Heart right ventricle (tissue), 16 donors: ENCODE measurements at regions of chr18 and their contacts with region 1.

Region 1: DNA sequence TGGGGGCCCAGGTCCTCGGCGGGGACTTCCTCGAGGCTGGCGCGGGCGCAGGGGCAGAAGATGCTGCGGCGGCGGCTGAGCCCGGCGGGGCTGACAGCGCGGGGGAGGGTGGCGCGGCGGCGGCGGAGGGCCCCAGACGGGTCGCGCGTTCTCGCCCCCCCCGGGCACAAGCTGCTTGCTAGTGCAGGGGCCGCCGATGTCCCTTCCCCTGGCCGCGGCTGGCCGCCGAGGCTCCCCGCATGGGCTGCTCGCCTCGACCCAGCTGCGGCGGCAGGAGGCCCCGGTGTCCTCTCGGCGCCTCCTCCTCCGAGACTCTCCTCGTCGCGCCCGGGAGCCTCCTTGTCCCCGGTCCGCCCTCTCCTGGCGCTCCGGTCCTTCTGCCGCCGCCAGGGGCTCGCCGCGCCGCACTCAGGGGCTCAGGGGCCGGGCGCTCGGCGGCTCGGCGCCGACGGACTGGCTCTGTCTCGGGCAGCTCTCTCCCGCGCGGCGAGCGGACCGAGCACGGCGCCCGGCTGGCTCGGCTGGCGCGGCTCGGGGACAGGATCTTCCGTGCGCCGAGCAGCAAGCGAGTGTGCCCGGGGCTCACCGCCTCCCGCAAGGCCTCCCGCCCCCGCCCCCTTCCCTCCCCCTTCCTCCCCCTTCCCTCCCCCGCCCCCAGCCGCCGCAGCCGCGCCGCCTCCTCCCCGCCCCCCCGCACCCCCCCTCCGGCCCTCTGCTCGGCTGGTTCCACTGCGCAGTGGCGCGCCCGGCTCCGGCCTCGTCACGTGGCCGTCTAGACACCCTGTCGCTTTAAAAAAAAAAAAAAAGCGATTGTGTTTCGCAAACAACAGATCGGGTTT is 902 bp upstream of the SMAD7 start:
- DNase-seq: peak; percentile 86 to 89
- ATAC-seq: peak; percentile 70 to 87 (median 82)
- H3K4me3 ChIP-seq: peak overlapping the region; percentile 68 to 96 (median 92)
- H3K27ac ChIP-seq: peak overlapping the region; percentile 93 to 100 (median 98)
- H3K4me1 ChIP-seq: peaks cover 5 to 55% (median 46%) of the 10 kb centered on the region in 9 donors
- H3K27me3 ChIP-seq: no peaks in the 10 kb centered on the region
- CTCF ChIP-seq: peak in 6 of 9 donors; percentile 13 to 56 (median 34)

Region 2: DNA sequence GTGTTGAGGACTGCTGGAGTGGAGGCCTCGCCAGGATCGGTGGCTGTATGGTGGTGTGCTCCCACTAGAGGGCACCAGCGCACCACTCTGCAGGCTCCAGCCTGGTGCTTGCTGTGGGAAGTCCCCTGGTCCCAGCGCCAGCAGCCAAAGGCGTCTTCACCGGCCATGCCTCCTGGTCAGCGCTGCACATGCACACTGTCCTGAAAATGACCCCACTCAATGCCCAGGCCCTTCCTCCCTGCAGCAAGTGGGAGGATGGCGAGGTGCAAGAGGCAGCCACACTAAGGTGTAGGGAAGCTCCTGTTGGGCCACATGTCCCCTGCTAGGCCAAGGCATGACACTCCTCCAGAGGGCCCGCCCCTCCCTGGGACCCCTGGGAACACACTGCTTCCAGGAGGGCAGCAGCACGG is 276.3 kb before region 1 on chr18:
- intact Hi-C with region 1: loop called in 8 of 10 experiments (anchors 2 to 10 kb)
- DNase-seq: peak; percentile 89 to 90
- ATAC-seq: peak; percentile 85 to 94 (median 90)
- H3K4me3 ChIP-seq: no peak overlapping the region
- H3K27ac ChIP-seq: peak overlapping the region in 2 of 10 donors; percentile 12 to 57
- H3K4me1 ChIP-seq: peaks cover 11 to 72% (median 66%) of the 10 kb centered on the region in 9 donors
- H3K27me3 ChIP-seq: no peaks in the 10 kb centered on the region
- CTCF ChIP-seq: peak; percentile 91 to 98 (median 94)

Region 3: DNA sequence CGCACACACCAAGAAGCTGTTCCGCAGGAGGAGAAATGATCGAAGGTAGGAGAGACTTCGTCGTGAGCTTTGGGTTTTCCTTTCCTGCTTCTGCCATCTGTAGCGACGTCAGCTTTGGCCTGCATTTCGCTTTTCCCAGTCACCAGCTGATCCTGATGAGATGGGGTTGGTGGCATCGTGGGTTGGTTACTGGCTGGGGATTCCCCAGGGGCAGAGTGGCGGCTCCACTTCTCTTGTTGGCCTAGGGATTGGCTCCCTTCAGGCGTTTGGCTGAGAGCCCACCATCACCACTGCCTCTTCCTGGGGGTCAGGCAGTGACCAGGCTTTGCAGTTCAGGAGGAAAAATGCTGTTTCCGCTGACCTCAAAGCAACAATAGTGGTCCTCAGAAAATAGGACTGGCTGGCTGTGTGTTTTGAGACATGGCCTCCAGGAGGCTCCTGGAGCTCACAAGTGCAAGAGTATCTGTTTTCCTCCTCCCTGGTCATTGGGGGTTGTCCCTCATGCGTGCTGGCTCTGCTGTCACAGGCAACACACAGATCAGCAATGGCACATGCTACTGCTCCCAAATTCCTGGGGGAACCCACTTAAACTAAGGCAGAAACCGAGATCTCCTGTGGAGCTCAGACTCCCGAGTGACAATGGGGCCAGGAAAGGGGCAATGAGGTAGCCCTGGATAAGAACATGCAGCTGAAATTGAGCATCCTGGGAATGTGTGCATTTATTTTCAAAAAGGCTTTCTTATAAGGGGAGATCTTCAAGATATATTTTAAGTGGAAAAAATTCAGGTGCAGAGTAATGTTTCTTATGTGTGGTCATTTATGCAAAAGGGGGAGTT is 239.8 kb before region 1 on chr18:
- intact Hi-C with region 1: loop called in 3 of 10 experiments (anchors 10 kb)
- DNase-seq: peak; percentile 28 to 69
- ATAC-seq: peak; percentile 51 to 76 (median 68)
- H3K4me3 ChIP-seq: no peak overlapping the region
- H3K27ac ChIP-seq: peak overlapping the region in 7 of 10 donors; percentile 14 to 92 (median 70)
- H3K4me1 ChIP-seq: peaks cover 23 to 86% (median 59%) of the 10 kb centered on the region in 9 donors
- H3K27me3 ChIP-seq: no peaks in the 10 kb centered on the region
- CTCF ChIP-seq: peak in 8 of 9 donors; percentile 50 to 75 (median 66)

Region 4: GRCh38 chr18:48790226-48790874 is 161.3 kb before region 1 on chr18:
- intact Hi-C with region 1: loop called in 1 of 10 experiments (anchors 5 kb)
- DNase-seq: peak; percentile 89 to 93
- ATAC-seq: peak; percentile 72 to 91 (median 89)
- H3K4me3 ChIP-seq: no peak overlapping the region
- H3K27ac ChIP-seq: peak overlapping the region; percentile 68 to 96 (median 92)
- H3K4me1 ChIP-seq: peaks cover 19 to 81% (median 48%) of the 10 kb centered on the region in 9 donors
- H3K27me3 ChIP-seq: no peaks in the 10 kb centered on the region
- CTCF ChIP-seq: no peak

Region 5: DNA sequence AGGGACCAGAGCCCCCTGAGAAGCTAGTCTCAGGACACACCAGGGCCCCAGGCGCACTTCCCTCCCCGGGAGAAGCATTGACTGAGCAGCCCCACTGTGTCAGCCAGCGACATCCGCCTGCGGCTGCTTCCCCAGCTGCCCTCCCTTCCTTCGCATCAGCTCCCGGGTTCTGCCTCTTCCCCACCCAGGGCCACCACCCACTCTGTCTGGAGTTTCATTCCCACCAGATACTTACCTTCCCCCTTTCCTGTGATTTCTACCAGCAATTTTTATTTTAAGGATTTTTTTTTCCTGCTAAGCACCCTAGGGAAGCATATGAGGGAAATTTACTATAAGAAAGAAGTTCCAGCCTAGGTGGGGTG is 100.1 kb before region 1 on chr18:
- intact Hi-C with region 1: loop called in 1 of 10 experiments (anchors 5 kb)
- DNase-seq: peak; percentile 69 to 73
- ATAC-seq: peak; percentile 56 to 86 (median 74)
- H3K4me3 ChIP-seq: peak overlapping the region in 2 of 10 donors; percentile 3 to 23
- H3K27ac ChIP-seq: peak overlapping the region; percentile 49 to 92 (median 87)
- H3K4me1 ChIP-seq: peaks cover 29 to 69% (median 65%) of the 10 kb centered on the region in 9 donors
- H3K27me3 ChIP-seq: no peaks in the 10 kb centered on the region
- CTCF ChIP-seq: no peak

Region 6: DNA sequence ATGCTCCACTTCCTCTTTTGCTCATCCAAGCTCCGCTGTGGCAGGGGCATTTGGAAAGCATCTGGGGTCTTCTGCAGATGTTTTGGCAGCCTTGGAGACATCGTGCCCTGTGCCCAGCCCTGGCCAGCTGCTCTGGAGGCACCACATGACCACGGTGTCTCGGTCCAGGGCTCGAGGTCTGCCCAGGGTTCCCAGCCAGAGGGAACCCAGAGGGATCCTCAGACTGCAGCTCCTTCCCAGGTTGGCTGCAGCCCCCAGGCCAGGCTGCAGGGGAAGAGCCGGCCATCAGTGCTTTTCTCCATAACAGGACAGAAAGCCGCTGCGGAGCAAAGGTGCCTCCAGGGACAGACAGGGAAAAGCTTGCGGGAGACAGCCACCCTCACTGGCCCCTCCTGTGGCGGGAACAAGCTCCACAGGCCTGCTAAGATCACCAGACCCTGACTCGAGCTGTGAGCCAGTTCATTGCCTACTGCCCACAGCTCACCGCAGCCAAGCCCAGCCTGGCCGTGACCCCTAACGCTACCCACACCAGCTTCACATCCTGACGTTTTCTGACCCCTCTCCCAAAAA is 75.6 kb before region 1 on chr18:
- intact Hi-C with region 1: no loop called
- DNase-seq: no peak
- ATAC-seq: no peak
- H3K4me3 ChIP-seq: no peak overlapping the region
- H3K27ac ChIP-seq: no peak overlapping the region
- H3K4me1 ChIP-seq: peaks cover 0 to 42% (median 6%) of the 10 kb centered on the region in 9 donors
- H3K27me3 ChIP-seq: no peaks in the 10 kb centered on the region
- CTCF ChIP-seq: no peak

Region 7: DNA sequence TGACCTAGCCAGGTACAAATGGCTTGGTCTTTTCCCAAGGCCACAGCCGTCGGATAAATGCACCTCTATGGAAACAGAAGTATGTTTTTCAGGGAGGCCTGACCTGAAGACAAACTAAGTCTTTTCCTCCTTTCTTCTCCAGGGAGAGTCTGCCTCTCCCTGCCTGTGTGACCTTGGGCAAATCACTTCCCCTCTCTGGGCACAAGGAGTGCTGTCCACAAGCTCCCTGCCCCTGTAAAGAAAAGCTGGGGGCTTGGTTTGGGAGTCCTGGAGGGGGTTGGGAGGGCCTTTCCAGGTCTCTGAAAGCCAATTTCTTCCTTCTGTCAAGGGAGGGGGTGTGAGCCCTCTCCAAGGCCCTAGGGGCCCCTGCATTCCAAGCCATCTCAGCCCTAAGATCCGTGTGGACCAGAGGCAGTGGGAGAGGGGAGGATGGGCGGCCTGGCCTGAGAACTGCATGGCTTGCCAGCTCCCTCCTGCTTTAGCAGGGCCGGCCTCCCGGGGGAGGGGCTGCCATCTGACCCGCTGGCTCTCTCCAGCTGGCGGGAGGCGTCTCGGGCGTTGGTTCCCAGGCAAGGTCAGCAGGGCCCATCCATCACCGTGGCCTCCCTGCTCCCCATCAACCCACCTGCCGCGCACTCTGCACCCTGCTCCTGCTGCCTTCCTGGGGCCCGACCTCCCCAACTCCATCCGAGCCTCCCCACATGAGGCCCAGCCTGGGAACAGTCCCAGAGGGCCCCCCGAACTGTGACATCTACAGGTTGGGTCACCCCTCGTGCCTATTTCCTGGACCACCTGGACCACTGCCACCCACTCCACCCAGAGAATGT is 62.3 kb before region 1 on chr18:
- intact Hi-C with region 1: no loop called
- DNase-seq: peak; percentile 55 to 63
- ATAC-seq: peak; percentile 35 to 68 (median 50)
- H3K4me3 ChIP-seq: no peak overlapping the region
- H3K27ac ChIP-seq: no peak overlapping the region
- H3K4me1 ChIP-seq: peaks cover 10 to 44% (median 32%) of the 10 kb centered on the region in 9 donors
- H3K27me3 ChIP-seq: no peaks in the 10 kb centered on the region
- CTCF ChIP-seq: no peak

Region 8: GRCh38 chr18:49041435-49042245 is 90.0 kb after region 1 on chr18:
- intact Hi-C with region 1: loop called in 1 of 10 experiments (anchors 5 kb)
- DNase-seq: peak; percentile 37 to 66
- ATAC-seq: peak; percentile 56 to 86 (median 71)
- H3K4me3 ChIP-seq: no peak overlapping the region
- H3K27ac ChIP-seq: peak overlapping the region in 1 of 10 donors; percentile 22
- H3K4me1 ChIP-seq: peaks cover 0 to 14% (median 8%) of the 10 kb centered on the region in 9 donors
- H3K27me3 ChIP-seq: no peaks in the 10 kb centered on the region
- CTCF ChIP-seq: peak; percentile 49 to 75 (median 69)

Region 9: GRCh38 chr18:49189772-49190171 is 238.1 kb after region 1 on chr18:
- intact Hi-C with region 1: loop called in 1 of 10 experiments (anchors 10 kb)
- DNase-seq: no peak
- ATAC-seq: no peak
- H3K4me3 ChIP-seq: no peak overlapping the region
- H3K27ac ChIP-seq: no peak overlapping the region
- H3K4me1 ChIP-seq: peaks cover 0 to 24% (median 11%) of the 10 kb centered on the region in 9 donors
- H3K27me3 ChIP-seq: no peaks in the 10 kb centered on the region
- CTCF ChIP-seq: no peak

Region 10: DNA sequence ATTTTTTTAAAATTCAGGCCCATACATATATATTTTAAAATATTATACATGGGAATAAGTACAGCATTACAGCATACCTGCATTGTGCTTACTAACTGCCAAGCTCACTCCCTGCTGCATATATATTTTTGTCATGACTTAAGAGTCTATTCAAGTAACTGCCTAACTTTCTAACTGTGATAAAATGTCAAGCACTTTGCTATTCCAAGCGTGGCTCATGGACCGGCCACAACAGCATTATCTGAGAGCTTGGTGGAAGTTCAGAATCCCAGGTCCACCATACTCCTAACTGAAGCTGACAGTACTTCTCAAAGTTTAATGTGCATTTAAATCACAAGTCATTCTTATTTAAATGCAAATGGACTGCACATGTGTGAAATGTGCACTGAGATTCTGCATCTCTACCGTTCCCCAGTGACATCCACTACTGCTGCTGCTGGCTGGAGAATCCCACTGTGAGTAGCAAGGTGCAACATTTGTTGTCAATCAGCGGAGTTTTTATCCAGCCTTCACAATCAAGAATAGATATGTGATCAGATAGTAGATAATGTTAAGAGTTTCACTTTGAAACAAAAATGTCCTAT is 429.7 kb after region 1 on chr18:
- intact Hi-C with region 1: no loop called
- DNase-seq: no peak
- ATAC-seq: peak in 7 of 8 donors; percentile 44 to 86 (median 61)
- H3K4me3 ChIP-seq: no peak overlapping the region
- H3K27ac ChIP-seq: no peak overlapping the region
- H3K4me1 ChIP-seq: peaks cover 0 to 17% (median 0%) of the 10 kb centered on the region in 9 donors
- H3K27me3 ChIP-seq: no peaks in the 10 kb centered on the region
- CTCF ChIP-seq: no peak